ENCODE measurements at regions of chr2 and their contacts with region 1.

Region 1: DNA sequence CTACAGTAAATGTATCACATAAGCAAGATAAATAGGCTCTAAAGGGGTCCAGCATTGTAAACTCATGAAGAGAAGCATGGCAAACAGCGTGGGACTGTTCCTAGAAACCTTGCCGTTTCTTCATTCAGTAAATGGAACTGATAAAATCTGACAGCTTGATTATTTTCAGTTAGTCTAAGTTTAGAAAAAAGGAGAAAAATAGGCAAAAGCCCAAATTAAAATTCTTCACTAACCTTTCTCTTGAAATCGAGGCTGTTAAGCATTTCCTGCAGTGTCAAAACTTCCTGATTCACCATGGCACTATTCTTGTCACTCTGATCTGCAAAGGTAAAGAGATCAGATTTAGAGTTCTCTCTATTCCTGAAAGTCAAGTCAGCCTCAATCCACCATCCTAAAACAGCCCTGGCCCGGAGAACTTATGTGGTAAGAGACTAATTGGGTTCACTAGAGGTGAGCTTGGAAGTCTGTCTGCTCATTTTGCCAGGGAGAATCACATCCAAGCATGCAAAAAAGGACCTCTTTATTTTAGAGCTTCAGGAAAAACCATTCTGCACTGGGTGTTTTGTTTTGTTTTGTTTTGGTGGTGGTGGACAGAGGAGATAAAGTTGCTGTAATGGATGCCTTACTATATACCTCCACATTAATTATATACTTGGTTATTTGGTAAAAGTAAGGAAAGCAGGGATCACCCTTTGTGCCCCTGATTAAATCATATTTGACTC is 52.4 kb upstream of the STAT1 start:
- DNase-seq: peak; percentile 41
- ATAC-seq: peak; percentile 37
- H3K4me3 Mint-ChIP-seq: peak overlapping the region; percentile 72
- H3K27ac Mint-ChIP-seq: peak overlapping the region; percentile 85
- H3K4me1 Mint-ChIP-seq: peaks cover 70% of the 10 kb centered on the region
- H3K27me3 Mint-ChIP-seq: no peaks in the 10 kb centered on the region

Region 2: GRCh38 chr2:190940454-190940853 is 125.9 kb before region 1 on chr2:
- CTCF ChIA-PET with region 1: no interaction called
- POLR2A ChIA-PET with region 1: no interaction called
- DNase-seq: no peak
- ATAC-seq: no peak
- H3K4me3 Mint-ChIP-seq: no peak overlapping the region
- H3K27ac Mint-ChIP-seq: no peak overlapping the region
- H3K4me1 Mint-ChIP-seq: peaks cover 2% of the 10 kb centered on the region
- H3K27me3 Mint-ChIP-seq: no peaks in the 10 kb centered on the region

Region 3: GRCh38 chr2:191020221-191020741 is 46.1 kb before region 1 on chr2:
- CTCF ChIA-PET with region 1: interaction called, 5 read pairs
- POLR2A ChIA-PET with region 1: interaction called, 67 read pairs
- DNase-seq: peak; percentile 94
- ATAC-seq: peak; percentile 75
- H3K4me3 Mint-ChIP-seq: no peak overlapping the region
- H3K27ac Mint-ChIP-seq: no peak overlapping the region
- H3K4me1 Mint-ChIP-seq: peaks cover 38% of the 10 kb centered on the region
- H3K27me3 Mint-ChIP-seq: no peaks in the 10 kb centered on the region

Region 4: GRCh38 chr2:191114403-191114886 is 48.1 kb after region 1 on chr2:
- CTCF ChIA-PET with region 1: interaction called, 6 read pairs
- POLR2A ChIA-PET with region 1: interaction called, 34 read pairs
- DNase-seq: peak; percentile 48
- ATAC-seq: peak; percentile 46
- H3K4me3 Mint-ChIP-seq: peak overlapping the region; percentile 53
- H3K27ac Mint-ChIP-seq: peak overlapping the region; percentile 92
- H3K4me1 Mint-ChIP-seq: peaks cover 76% of the 10 kb centered on the region
- H3K27me3 Mint-ChIP-seq: no peaks in the 10 kb centered on the region

Region 5: GRCh38 chr2:191128172-191128910 is 62.0 kb after region 1 on chr2:
- CTCF ChIA-PET with region 1: interaction called, 9 read pairs
- POLR2A ChIA-PET with region 1: interaction called, 12 read pairs
- DNase-seq: peak; percentile 44
- ATAC-seq: peak; percentile 88
- H3K4me3 Mint-ChIP-seq: peak overlapping the region; percentile 66
- H3K27ac Mint-ChIP-seq: peak overlapping the region; percentile 91
- H3K4me1 Mint-ChIP-seq: peaks cover 77% of the 10 kb centered on the region
- H3K27me3 Mint-ChIP-seq: no peaks in the 10 kb centered on the region